Activated CD4-positive, alpha-beta memory T cell treated with anti-CD3 and anti-CD28 coated beads for 36 hours (primary cell): ENCODE measurements at regions of chr14 and their contacts with region 1.

Region 1: DNA sequence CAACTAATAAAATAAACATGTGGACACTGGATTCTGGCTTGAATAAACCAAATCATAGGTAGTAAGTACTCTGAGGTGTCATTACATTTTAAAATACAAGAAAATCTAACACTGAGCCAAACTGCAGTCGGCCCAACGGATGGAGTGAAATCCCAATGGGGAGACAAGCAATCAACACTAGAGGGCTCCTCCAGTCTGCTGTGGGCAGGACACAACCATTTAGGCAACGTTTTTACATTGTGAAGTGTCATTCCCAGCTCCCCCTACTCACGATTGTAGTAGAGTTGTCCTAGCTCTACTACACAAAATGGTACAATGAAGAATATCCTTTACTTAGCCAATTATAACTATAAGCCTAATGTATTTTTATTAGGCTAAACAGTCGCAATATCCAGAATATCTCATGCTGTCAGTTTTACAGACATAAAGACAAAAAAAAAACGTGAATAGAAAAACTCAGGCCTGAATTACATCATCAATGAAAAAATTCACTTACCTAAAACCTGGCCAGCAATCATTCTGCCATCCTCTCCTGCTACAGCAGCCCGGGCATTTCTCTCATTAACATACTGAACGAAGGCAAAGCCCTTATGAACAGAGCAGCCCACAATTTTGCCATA is 35.7 kb downstream of the HNRNPC start:
- DNase-seq: peak; percentile 33
- H3K4me3 Mint-ChIP-seq: peak overlapping the region; percentile 46
- H3K27ac Mint-ChIP-seq: peak overlapping the region; percentile 79
- H3K4me1 Mint-ChIP-seq: peaks cover 89% of the 10 kb centered on the region
- H3K27me3 Mint-ChIP-seq: no peaks in the 10 kb centered on the region

Region 2: GRCh38 chr14:21215130-21215878 is 18.3 kb before region 1 on chr14:
- CTCF ChIA-PET with region 1: interaction called, 4 read pairs
- POLR2A ChIA-PET with region 1: interaction called, 7 read pairs
- intact Hi-C with region 1: loop called (anchors 2 kb)
- DNase-seq: no peak
- H3K4me3 Mint-ChIP-seq: no peak overlapping the region
- H3K27ac Mint-ChIP-seq: peak overlapping the region; percentile 86
- H3K4me1 Mint-ChIP-seq: peaks cover 74% of the 10 kb centered on the region
- H3K27me3 Mint-ChIP-seq: no peaks in the 10 kb centered on the region

Region 3: GRCh38 chr14:21244540-21244939 is 11.0 kb after region 1 on chr14:
- CTCF ChIA-PET with region 1: interaction called, 4 read pairs
- POLR2A ChIA-PET with region 1: interaction called, 4 read pairs
- intact Hi-C with region 1: loop called (anchors 2 kb)
- DNase-seq: no peak
- H3K4me3 Mint-ChIP-seq: no peak overlapping the region
- H3K27ac Mint-ChIP-seq: no peak overlapping the region
- H3K4me1 Mint-ChIP-seq: peaks cover 74% of the 10 kb centered on the region
- H3K27me3 Mint-ChIP-seq: no peaks in the 10 kb centered on the region

Region 4: DNA sequence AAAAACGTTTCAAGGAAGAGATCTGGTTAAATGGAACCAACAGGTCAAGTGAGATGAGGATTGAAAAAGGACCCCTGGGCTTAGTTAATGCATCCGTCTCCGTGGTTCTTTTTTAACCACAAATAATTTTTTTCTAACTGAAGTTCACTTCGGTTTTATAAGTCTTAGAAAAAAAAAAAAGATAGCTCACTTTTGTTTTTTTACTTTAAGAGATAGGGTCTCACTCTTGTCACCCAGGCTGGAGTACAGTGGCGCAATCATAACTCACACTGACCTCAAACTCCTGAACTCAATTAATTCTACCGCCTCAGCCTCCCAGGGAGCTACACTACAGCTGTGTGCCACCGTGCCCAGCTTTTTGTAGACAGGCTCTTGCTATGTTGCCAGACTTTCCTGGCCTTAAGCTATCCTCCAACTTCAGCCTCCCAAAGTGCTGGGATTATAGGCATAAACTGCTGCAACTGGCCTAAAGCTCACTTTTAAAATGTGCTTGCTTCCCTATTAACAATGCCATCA is 23.9 kb after region 1 on chr14:
- CTCF ChIA-PET with region 1: interaction called, 5 read pairs
- POLR2A ChIA-PET with region 1: interaction called, 16 read pairs
- intact Hi-C with region 1: loop called (anchors 2 kb)
- DNase-seq: no peak
- H3K4me3 Mint-ChIP-seq: peak overlapping the region; percentile 51
- H3K27ac Mint-ChIP-seq: peak overlapping the region; percentile 77
- H3K4me1 Mint-ChIP-seq: peaks cover 75% of the 10 kb centered on the region
- H3K27me3 Mint-ChIP-seq: no peaks in the 10 kb centered on the region

Region 5: GRCh38 chr14:21263656-21264411 is 30.3 kb after region 1 on chr14:
- CTCF ChIA-PET with region 1: interaction called, 4 read pairs
- POLR2A ChIA-PET with region 1: interaction called, 15 read pairs
- intact Hi-C with region 1: loop called (anchors 1 kb)
- DNase-seq: no peak
- H3K4me3 Mint-ChIP-seq: peak overlapping the region; percentile 100
- H3K27ac Mint-ChIP-seq: peak overlapping the region; percentile 100
- H3K4me1 Mint-ChIP-seq: peaks cover 67% of the 10 kb centered on the region
- H3K27me3 Mint-ChIP-seq: no peaks in the 10 kb centered on the region

Region 6: GRCh38 chr14:21334202-21334899 is 100.8 kb after region 1 on chr14:
- CTCF ChIA-PET with region 1: no interaction called
- POLR2A ChIA-PET with region 1: no interaction called
- intact Hi-C with region 1: no loop called
- DNase-seq: no peak
- H3K4me3 Mint-ChIP-seq: no peak overlapping the region
- H3K27ac Mint-ChIP-seq: no peak overlapping the region
- H3K4me1 Mint-ChIP-seq: no peaks in the 10 kb centered on the region
- H3K27me3 Mint-ChIP-seq: no peaks in the 10 kb centered on the region

Region 7: GRCh38 chr14:21557084-21557901 is 323.7 kb after region 1 on chr14:
- CTCF ChIA-PET with region 1: no interaction called
- POLR2A ChIA-PET with region 1: no interaction called
- intact Hi-C with region 1: loop called (anchors 10 kb)
- DNase-seq: peak; percentile 76
- H3K4me3 Mint-ChIP-seq: no peak overlapping the region
- H3K27ac Mint-ChIP-seq: peak overlapping the region; percentile 16
- H3K4me1 Mint-ChIP-seq: peaks cover 5% of the 10 kb centered on the region
- H3K27me3 Mint-ChIP-seq: no peaks in the 10 kb centered on the region